Endothelial cell of umbilical vein (primary cell): ENCODE measurements at regions of chr18 and their contacts with region 1.

Region 1: GRCh38 chr18:11310476-11311086 is 161.2 kb upstream of the PIEZO2 start:
- DNase-seq: peak; percentile 16
- H3K4me3 ChIP-seq: no peak overlapping the region
- H3K27ac ChIP-seq: no peak overlapping the region
- H3K4me1 ChIP-seq: no peaks in the 10 kb centered on the region
- H3K27me3 ChIP-seq: no peaks in the 10 kb centered on the region
- CTCF ChIP-seq: peak; percentile 63 to 73
- POLR2A ChIP-seq: no peak

Region 2: GRCh38 chr18:11407940-11408339 is 97.4 kb after region 1 on chr18:
- CTCF ChIA-PET with region 1: no interaction called
- POLR2A ChIA-PET with region 1: no interaction called
- dilution Hi-C with region 1: no loop called
- intact Hi-C with region 1: no loop called
- DNase-seq: no peak
- H3K4me3 ChIP-seq: no peak overlapping the region
- H3K27ac ChIP-seq: no peak overlapping the region
- H3K4me1 ChIP-seq: no peaks in the 10 kb centered on the region
- H3K27me3 ChIP-seq: no peaks in the 10 kb centered on the region
- CTCF ChIP-seq: no peak
- POLR2A ChIP-seq: no peak

Region 3: GRCh38 chr18:11512096-11513030 is 201.8 kb after region 1 on chr18:
- CTCF ChIA-PET with region 1: interaction called, 64 read pairs
- POLR2A ChIA-PET with region 1: no interaction called
- dilution Hi-C with region 1: no loop called
- intact Hi-C with region 1: no loop called
- DNase-seq: no peak
- H3K4me3 ChIP-seq: no peak overlapping the region
- H3K27ac ChIP-seq: no peak overlapping the region
- H3K4me1 ChIP-seq: no peaks in the 10 kb centered on the region
- H3K27me3 ChIP-seq: no peaks in the 10 kb centered on the region
- CTCF ChIP-seq: no peak
- POLR2A ChIP-seq: no peak

Region 4: DNA sequence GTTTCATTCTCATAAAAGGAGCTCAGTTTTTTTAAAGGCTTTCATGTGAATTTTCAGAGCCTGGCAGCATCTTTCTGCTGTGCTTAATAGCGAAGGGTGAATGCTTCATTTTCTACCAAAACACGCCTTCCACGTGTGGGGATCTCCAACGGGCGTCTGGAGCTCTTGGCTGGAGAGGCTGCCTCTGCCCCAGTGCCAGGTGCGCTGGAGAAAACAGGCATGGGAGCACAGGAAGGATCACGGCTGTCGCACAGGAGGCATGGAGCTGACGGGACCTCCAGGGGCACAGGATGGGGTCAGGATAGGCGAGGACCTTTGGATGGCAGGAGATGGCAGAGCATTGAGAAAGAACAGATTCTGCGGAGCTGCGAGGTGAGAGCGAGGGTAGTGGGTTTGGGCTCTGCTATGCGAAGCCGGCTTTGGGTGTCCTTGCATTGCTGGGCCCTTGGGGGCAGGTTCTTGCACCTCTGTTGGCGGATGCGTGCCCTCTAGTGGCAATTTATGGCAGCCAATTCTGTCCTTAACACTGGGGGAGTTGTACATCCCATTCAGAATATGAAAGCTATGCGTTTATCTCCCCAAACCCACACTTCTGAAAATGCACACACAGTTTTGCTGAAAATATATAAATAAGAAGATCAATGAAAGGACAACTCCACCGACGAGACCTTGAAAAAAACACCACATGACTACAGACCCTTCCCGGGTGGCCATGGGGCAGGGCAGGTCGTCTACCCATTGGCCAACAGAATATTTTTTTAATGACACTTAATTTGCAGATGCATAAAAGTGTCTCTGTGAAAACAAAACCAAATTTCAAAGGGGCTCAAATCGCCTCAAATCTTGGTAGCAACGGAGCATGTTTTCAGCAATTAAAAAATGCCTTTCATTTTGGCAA is 208.5 kb after region 1 on chr18:
- CTCF ChIA-PET with region 1: interaction called, 64 read pairs
- POLR2A ChIA-PET with region 1: no interaction called
- dilution Hi-C with region 1: no loop called
- intact Hi-C with region 1: loop called (anchors 1 kb)
- DNase-seq: peak; percentile 39
- H3K4me3 ChIP-seq: no peak overlapping the region
- H3K27ac ChIP-seq: no peak overlapping the region
- H3K4me1 ChIP-seq: peaks cover 17% of the 10 kb centered on the region
- H3K27me3 ChIP-seq: no peaks in the 10 kb centered on the region
- CTCF ChIP-seq: peak; percentile 72 to 81
- POLR2A ChIP-seq: no peak

Region 5: GRCh38 chr18:11541202-11541601 is 230.6 kb after region 1 on chr18:
- CTCF ChIA-PET with region 1: interaction called, 10 read pairs
- POLR2A ChIA-PET with region 1: no interaction called
- dilution Hi-C with region 1: no loop called
- intact Hi-C with region 1: no loop called
- DNase-seq: no peak
- H3K4me3 ChIP-seq: no peak overlapping the region
- H3K27ac ChIP-seq: no peak overlapping the region
- H3K4me1 ChIP-seq: no peaks in the 10 kb centered on the region
- H3K27me3 ChIP-seq: no peaks in the 10 kb centered on the region
- CTCF ChIP-seq: no peak
- POLR2A ChIP-seq: no peak

Region 6: DNA sequence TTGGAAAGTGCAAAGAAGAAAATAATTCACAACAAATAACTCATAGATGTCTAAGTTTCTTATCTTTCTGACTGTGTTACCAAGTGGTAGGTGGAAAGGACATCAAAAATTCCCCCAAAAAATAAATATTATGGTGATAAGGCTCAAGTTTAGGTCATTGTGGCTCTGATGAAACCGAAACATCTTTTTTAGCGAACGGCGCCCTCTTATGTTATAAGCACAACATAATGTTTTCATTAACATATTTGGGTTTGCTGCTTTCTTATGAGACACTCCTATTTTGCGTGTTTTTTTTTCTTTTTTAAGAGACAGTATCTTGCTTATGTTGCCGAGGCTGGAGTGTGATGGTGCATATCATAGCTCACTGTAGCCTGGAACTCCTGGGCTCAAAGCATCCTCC is 260.2 kb after region 1 on chr18:
- CTCF ChIA-PET with region 1: interaction called, 12 read pairs
- POLR2A ChIA-PET with region 1: no interaction called
- dilution Hi-C with region 1: no loop called
- intact Hi-C with region 1: no loop called
- DNase-seq: no peak
- H3K4me3 ChIP-seq: no peak overlapping the region
- H3K27ac ChIP-seq: no peak overlapping the region
- H3K4me1 ChIP-seq: no peaks in the 10 kb centered on the region
- H3K27me3 ChIP-seq: peaks cover 0 to 2% of the 10 kb centered on the region in 2 experiments
- CTCF ChIP-seq: no peak
- POLR2A ChIP-seq: no peak